Activated CD8-positive, alpha-beta memory T cell treated with anti-CD3 and anti-CD28 coated beads, Interleukin-2, amount 10 ng/mL, durations not matched to agents 7 days and 5 days (primary cell): ENCODE measurements at regions of chr11 and their contacts with region 1.

Region 1: DNA sequence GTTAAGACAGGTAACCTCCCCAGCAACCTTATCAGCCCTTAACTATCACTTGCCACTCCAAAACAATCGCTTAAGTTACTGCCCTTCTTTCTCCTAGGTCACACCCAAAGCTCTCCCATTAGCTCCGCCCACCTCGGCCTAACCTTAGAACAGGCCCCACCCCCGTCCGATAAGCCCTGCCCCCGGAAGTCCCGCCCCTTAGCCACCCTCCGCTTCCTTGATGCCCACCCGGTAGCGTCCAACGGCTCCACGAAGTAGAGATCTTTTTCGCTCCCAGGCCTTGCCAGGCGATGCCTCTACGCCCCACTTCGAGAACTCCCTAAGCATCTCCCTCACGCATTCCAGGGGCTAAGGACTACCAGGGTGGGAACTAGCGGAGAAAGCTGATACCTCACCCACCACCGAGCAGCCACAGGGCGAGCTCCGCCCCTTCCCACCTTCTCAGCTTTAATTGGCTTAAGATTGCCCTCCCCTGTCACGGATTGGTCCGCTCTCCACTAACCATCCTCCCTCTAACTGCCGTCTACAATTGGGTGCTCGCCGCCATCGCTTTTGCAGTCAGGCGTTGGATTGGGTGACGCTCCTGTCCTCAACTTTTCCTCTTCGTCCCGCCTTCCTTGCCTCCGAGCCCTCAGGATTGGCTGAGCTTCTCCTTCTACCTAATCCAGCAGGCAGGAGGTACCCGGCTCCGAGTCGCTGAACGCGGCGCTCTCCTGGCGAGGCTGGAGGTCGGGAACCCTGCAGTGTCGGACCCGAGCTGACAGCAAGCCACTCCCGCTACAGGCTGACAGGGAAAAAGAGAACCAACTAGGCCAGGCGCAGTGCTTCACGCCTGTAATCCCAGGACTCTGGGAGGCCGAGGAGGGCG is at the start of gene ZBTB3:
- DNase-seq: peak; percentile 99
- ATAC-seq: peak; percentile 98
- H3K4me3 Mint-ChIP-seq: peak within 1 kb of the TSS; percentile 99
- H3K27ac Mint-ChIP-seq: peak within 1 kb of the TSS; percentile 99
- H3K4me1 Mint-ChIP-seq: peaks cover 34% of the 10 kb centered on the region
- H3K27me3 Mint-ChIP-seq: no peaks in the 10 kb centered on the region
- total RNA-seq, gene ZBTB3: 9.3 to 10.2 TPM

Region 2: DNA sequence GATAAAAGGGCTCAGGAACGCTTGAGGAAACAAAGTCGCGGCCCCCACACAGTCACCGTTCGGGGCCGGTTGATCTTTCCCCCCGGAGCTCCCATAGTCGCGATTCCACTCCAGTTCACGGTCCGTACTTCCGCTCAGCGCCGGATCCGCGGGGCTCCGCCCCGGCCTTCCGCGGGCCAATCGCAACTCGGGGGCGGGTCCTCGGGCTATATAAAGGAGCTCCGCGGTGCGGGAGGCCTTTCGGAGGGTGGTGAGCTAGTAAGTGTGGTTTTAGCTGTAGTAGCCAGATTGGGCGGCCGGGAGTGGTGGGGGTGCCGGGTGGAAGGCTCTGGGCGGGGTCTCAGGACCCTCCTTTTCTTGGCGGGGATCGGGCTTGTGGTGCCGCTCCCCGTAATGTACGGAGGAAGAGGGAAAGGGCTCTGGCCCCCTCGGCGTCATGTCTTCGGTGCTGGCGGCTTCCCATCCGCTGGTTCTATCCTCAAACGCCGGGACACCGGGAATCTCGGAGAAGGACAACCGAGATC is 88.8 kb before region 1 on chr11 and contains the starts of genes C11orf98 and CSKMT:
- CTCF ChIA-PET with region 1: interaction called, 10 read pairs
- DNase-seq: peak; percentile 97
- ATAC-seq: peak; percentile 91
- H3K4me3 Mint-ChIP-seq: peak within 1 kb of the TSS; percentile 97
- H3K27ac Mint-ChIP-seq: peak within 1 kb of the TSS; percentile 95
- H3K4me1 Mint-ChIP-seq: peaks cover 40% of the 10 kb centered on the region
- H3K27me3 Mint-ChIP-seq: no peaks in the 10 kb centered on the region
- total RNA-seq, gene C11orf98: 130 to 131 TPM
- total RNA-seq, gene CSKMT: 23.7 to 31.0 TPM

Region 3: DNA sequence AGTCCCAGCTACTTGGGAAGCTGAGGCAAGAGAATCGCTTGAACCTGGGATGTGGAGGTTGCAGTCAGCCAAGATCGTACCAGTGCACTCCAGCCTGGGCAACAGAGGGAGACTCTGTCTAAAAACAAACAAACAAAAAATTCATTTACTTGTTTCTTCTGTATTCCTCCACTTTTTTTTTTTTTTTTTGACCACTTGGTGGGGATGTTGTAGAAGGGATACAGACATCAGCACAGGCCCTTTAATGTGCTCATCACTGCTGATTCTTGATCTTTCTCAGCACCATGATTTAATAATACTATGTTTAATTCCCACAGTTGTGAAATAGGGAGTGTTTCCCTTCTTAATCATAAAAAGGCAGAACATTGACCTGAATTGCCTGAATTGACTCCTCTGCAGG is 21.2 kb before region 1 on chr11:
- CTCF ChIA-PET with region 1: interaction called, 16 read pairs
- DNase-seq: no peak
- ATAC-seq: no peak
- H3K4me3 Mint-ChIP-seq: no peak overlapping the region
- H3K27ac Mint-ChIP-seq: no peak overlapping the region
- H3K4me1 Mint-ChIP-seq: peaks cover 30% of the 10 kb centered on the region
- H3K27me3 Mint-ChIP-seq: no peaks in the 10 kb centered on the region

Region 4: DNA sequence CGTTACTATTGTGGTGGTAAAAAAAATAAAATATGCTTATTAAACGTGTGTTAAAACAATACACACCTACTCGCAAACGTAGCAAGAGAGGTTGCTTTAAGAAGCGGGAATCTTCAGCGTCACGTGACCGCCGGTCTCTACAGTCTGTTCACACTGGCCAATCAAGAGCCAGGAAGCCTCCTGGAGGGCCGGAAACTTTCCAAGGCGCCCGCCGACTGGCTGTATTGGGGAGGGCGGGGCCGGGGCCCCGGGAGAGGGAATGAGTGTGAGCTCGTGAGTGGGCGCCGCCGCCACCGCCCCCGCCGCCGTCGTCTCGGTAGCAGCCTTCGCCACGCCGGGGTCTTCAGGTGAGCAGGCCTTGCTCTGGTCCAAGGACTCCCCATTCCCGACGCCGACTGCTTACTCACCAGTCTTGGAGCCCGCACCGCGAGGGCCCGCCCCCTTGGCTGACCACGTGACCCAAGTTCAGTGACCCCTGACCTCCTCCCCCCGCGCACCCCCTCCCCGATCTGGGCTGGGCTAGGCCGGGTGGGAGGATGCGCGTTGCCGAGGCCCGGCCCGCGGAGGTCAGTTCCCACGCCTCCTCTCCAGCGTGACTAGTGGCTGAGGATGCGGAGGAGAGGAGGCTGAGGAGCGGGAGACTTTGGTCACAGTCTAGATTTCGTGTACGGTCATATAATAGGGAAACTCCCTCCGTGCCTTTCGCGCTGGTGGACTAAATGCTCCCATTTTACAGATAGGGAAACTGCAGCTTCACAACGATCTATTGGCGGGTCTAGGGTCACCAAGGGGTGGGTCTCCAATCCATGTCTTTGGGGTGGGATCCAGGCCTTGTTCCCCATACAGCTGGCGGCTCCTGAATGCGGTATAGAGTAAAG is 17.4 kb after region 1 on chr11 and contains the start of gene TAF6L:
- CTCF ChIA-PET with region 1: interaction called, 45 read pairs
- DNase-seq: peak; percentile 97
- ATAC-seq: peak; percentile 89
- H3K4me3 Mint-ChIP-seq: peak within 1 kb of the TSS; percentile 88
- H3K27ac Mint-ChIP-seq: peak within 1 kb of the TSS; percentile 95
- H3K4me1 Mint-ChIP-seq: peaks cover 32% of the 10 kb centered on the region
- H3K27me3 Mint-ChIP-seq: no peaks in the 10 kb centered on the region
- total RNA-seq, gene TAF6L: 23.5 to 25.0 TPM

Region 5: GRCh38 chr11:62931499-62932278 is 177.7 kb after region 1 on chr11:
- CTCF ChIA-PET with region 1: no interaction called
- DNase-seq: no peak
- ATAC-seq: no peak
- H3K4me3 Mint-ChIP-seq: no peak overlapping the region
- H3K27ac Mint-ChIP-seq: no peak overlapping the region
- H3K4me1 Mint-ChIP-seq: no peaks in the 10 kb centered on the region
- H3K27me3 Mint-ChIP-seq: peaks cover 48% of the 10 kb centered on the region